Dendritic cell treated with granulocyte-macrophage colony-stimulating factor and Interleukin-4, amounts not matched to agents 40 ng/mL and 50 ng/mL, for 4 days (primary cell): ENCODE measurements at regions of chr1 and their contacts with region 1.

Region 1: GRCh38 chr1:111222308-111223125 is 5.0 kb upstream of the CHI3L2 start:
- H3K4me3 Mint-ChIP-seq: peak overlapping the region; percentile 26
- H3K27ac Mint-ChIP-seq: peak overlapping the region; percentile 51
- H3K4me1 Mint-ChIP-seq: peaks cover 67% of the 10 kb centered on the region
- H3K27me3 Mint-ChIP-seq: peaks cover 2% of the 10 kb centered on the region

Region 2: GRCh38 chr1:111133866-111134265 is 88.7 kb before region 1 on chr1:
- intact Hi-C with region 1: no loop called
- H3K4me3 Mint-ChIP-seq: peak overlapping the region; percentile 39
- H3K27ac Mint-ChIP-seq: peak overlapping the region; percentile 92
- H3K4me1 Mint-ChIP-seq: peaks cover 61% of the 10 kb centered on the region
- H3K27me3 Mint-ChIP-seq: no peaks in the 10 kb centered on the region

Region 3: DNA sequence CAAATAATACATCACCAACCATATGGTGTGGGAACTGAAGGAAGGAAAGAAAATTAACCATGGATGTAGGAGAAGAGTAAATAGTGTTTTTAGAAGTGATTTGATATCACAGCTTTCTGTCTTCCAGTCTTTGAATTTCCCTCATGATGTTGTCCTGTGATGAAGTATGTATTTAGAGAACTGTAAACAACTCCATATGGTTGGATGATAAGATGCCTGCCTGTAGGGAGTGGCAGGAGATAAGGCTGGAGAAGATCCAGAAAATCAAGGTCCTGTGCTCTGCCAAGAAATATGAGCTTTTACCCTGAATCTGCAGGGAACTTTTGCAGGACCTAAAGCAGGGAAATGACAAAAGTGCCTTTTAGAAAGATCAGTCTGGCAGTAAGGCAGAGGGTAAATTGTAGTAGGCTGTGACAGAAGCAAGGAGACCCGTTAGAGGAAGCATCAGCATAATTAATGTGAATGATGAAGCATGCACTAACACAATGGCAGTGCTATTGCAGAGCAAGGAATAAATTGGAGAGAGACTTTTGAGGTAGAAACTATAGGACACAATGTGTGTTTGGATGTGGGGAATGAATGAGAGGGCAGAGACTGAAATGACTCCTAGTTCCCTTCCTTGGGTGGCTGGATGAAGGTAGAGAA is 60.6 kb before region 1 on chr1:
- intact Hi-C with region 1: no loop called
- H3K4me3 Mint-ChIP-seq: no peak overlapping the region
- H3K27ac Mint-ChIP-seq: peak overlapping the region; percentile 2
- H3K4me1 Mint-ChIP-seq: peaks cover 12% of the 10 kb centered on the region
- H3K27me3 Mint-ChIP-seq: no peaks in the 10 kb centered on the region

Region 4: DNA sequence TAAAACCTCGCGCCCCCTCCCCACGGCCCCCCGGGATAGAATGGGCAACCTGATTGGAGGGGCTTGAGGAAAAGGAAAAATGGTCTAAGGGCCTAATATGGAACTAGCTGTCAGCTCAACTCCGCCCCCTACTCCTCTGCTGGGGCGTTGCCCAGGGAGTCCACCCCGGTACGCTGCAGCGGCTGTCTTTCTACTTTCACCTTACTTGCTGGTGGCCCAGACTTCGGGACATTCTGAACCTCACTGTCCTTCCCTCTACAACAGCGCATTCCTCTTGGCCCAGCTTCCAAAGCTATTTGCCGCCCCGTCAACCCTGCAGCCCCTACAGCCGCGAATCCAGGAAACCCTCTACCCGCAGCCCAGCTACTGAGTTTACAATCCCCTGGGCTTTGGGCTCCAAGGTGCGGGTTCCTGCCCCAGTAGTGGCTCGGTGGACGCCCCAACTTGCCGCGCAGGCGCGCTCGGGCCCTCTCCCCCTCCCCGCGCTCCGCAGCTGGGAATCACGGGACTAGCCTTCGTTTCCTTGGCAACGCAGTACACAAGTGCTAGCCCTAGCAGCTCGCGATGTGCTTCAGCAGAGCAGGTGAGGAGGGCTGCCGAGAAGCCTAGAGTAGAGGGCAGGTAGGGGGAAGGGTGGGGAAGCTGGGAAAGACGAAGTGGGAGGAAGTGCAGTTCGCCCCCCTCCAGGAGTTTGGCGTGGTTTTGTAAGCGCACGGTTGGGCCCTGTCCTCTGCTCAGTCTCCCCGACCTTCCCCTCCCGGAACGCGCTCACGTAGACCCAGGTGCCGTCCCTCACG is 123.8 kb after region 1 on chr1:
- intact Hi-C with region 1: loop called (anchors 10 kb)
- H3K4me3 Mint-ChIP-seq: peak overlapping the region; percentile 82
- H3K27ac Mint-ChIP-seq: peak overlapping the region; percentile 82
- H3K4me1 Mint-ChIP-seq: peaks cover 17% of the 10 kb centered on the region
- H3K27me3 Mint-ChIP-seq: peaks cover 34% of the 10 kb centered on the region

Region 5: GRCh38 chr1:111399792-111400610 is 177.5 kb after region 1 on chr1:
- intact Hi-C with region 1: loop called (anchors 1 kb)
- H3K4me3 Mint-ChIP-seq: no peak overlapping the region
- H3K27ac Mint-ChIP-seq: no peak overlapping the region
- H3K4me1 Mint-ChIP-seq: peaks cover 6% of the 10 kb centered on the region
- H3K27me3 Mint-ChIP-seq: peaks cover 35% of the 10 kb centered on the region

Region 6: DNA sequence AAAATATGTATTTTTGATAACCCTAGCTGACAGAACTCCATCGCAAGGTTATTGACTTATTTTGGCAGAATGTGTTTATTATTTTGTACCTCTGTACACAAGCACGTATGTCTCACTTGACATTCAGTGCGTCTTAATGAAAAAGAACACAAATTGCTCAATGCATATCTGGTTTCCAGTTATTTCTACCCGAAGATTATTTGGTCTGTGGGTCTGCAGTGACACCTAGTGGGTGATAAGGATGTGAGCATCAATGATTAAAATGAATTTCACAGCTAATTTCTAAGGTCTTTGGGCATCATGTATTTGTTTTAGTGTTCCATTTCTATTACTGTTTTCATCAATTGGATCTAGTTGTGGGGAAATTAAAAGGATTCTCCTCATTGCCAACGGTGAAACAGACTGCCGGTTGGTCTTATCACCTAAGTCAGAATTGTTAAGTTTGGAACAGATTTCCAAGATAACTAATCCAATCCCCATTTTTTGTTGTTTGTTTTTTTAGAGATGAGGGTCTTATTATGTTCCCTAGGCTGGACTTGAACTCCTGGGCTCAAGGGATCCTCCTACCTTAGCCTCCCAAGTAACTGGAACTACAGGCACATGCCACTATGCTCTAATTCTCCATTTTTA is 547.1 kb after region 1 on chr1:
- intact Hi-C with region 1: loop called (anchors 10 kb)
- H3K4me3 Mint-ChIP-seq: no peak overlapping the region
- H3K27ac Mint-ChIP-seq: no peak overlapping the region
- H3K4me1 Mint-ChIP-seq: no peaks in the 10 kb centered on the region
- H3K27me3 Mint-ChIP-seq: no peaks in the 10 kb centered on the region